ENCODE measurements at regions of chr3 and their contacts with region 1.

Region 1: DNA sequence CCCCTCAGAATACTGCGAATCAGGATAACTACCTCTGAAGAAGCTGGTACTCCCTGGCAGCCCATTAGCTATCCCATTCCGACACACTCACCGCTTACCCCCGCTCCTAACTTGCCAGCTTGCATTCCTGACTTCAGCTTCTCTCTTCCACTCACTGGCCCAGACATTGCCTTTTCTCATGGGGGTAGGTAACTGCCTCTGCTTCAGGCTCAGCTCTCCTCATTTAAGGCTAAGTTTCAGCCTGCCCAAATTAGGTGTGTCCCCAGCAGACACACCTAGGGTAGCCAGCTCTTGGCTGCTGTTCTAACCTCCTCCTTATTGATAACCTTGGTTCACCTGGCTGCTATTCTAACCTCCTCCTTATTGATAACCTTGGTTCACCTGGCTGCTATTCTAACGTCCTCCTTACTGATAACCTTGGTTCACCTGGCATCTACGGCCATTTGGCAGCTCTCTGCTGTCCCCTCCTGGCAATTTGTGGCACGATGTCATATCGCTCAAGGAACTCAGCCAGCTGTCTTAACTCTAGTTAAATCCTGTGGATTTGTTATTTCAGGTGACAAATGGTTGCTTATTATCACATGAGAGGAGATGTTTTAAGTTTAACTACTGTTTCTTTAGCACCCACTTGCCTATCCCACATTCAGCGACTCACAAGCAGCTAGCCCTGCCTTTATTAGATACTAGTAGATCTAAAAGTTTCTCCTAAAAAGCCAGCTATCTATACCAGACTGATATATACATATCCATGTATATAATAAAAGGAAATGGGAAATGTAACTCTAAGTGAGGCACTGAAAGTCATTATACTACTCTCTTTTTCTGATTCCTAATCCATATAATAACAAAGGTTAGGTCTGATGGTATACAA is 106.5 kb upstream of the ACP3 start:
- DNase-seq: peak; percentile 49 to 84
- H3K4me3 ChIP-seq: no peak overlapping the region
- H3K27ac ChIP-seq: no peak overlapping the region
- H3K4me1 ChIP-seq: peaks cover 0 to 4% (median under 1%) of the 10 kb centered on the region in 4 experiments; a peak in 2 of 7 replicates
- H3K27me3 ChIP-seq: peaks cover 27 to 42% (median 40%) of the 10 kb centered on the region in 4 experiments
- CTCF ChIP-seq: peak; percentile 88 to 93 (median 90)
- EP300 ChIP-seq: no peak
- POLR2A ChIP-seq: no peak
- RAD21 ChIP-seq: peak; percentile 91 to 95

Region 2: GRCh38 chr3:132016061-132017041 is 194.4 kb before region 1 on chr3:
- CTCF ChIA-PET with region 1: no interaction called
- POLR2A ChIA-PET with region 1: no interaction called
- DNase-seq: no peak
- H3K4me3 ChIP-seq: no peak overlapping the region
- H3K27ac ChIP-seq: no peak overlapping the region
- H3K4me1 ChIP-seq: peaks cover 0 to 4% (median 1%) of the 10 kb centered on the region in 4 experiments; a peak in 2 of 7 replicates
- H3K27me3 ChIP-seq: no peaks in the 10 kb centered on the region
- CTCF ChIP-seq: no peak
- EP300 ChIP-seq: no peak
- POLR2A ChIP-seq: no peak
- RAD21 ChIP-seq: no peak

Region 3: DNA sequence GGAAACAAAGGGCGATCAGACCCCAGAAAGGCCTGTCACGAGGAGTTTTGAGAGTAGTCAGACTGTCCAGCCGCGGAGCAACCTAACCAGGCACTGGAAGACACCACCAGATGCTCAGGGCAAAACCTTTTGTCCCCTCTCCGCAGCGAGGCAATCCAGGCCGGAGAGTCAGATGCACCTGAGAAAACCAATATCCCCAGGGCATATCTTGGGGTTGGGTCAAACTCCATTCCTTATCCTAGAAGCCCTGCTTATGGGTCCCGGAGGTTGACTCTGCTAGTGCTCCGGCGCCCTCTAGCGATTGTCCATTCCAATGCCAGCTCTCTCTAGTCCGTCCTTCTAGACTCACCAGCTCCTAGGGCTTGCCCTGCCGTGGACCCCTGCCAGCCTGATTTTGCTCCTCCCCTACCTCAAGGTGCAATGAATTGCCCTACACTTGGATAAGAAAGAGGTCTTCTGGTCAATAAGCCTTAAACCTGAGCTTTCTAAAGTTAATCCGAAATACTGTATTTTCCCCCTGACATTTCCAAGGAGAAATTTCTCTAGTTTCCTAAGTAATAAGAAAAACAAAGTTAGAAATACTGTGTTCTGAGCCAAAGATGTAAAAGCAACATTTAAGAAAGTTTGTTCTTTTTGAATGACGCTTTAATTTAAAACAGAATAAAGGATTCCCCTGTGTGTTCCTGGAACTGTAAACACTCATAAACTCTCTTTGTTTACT is 181.4 kb before region 1 on chr3:
- CTCF ChIA-PET with region 1: interaction called, 15 read pairs
- POLR2A ChIA-PET with region 1: no interaction called
- DNase-seq: peak; percentile 91 to 94
- H3K4me3 ChIP-seq: no peak overlapping the region
- H3K27ac ChIP-seq: no peak overlapping the region
- H3K4me1 ChIP-seq: peaks cover 0 to 2% (median 0%) of the 10 kb centered on the region in 4 experiments; a peak in 3 of 7 replicates
- H3K27me3 ChIP-seq: peaks cover 0 to 14% (median 6%) of the 10 kb centered on the region in 4 experiments; a peak in 6 of 7 replicates
- CTCF ChIP-seq: peak; percentile 85 to 96 (median 96)
- EP300 ChIP-seq: no peak
- POLR2A ChIP-seq: no peak
- RAD21 ChIP-seq: peak; percentile 99

Region 4: DNA sequence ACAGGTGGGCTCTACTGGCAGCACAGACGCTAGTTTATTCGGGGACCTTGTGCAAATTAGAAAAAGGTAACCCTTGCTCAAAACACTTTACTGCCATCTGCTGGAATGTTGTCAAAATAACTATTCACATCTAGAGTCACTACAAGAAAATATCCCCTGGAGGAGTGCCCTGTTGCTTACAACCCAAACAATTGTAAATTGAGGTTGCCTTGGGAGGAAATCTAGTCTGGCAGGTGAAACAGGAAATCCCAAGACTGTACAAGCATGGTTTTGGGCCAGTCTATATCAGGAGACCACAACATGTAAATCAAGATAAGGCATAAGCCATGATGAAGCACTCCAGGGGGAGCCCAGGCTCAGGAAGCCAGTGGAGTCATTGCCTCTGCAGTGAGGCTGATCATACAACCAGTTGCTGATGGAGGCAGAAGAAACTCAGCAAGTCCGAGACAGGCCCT is 30.3 kb before region 1 on chr3:
- CTCF ChIA-PET with region 1: interaction called, 20 read pairs
- POLR2A ChIA-PET with region 1: no interaction called
- DNase-seq: peak; percentile 5 to 47
- H3K4me3 ChIP-seq: no peak overlapping the region
- H3K27ac ChIP-seq: no peak overlapping the region
- H3K4me1 ChIP-seq: peaks cover 0 to 3% (median 2%) of the 10 kb centered on the region in 4 experiments; a peak in 2 of 7 replicates
- H3K27me3 ChIP-seq: no peaks in the 10 kb centered on the region; a peak in 1 of 7 replicates
- CTCF ChIP-seq: peak in 2 of 3 experiments; percentile 61 to 69; a peak in 3 of 4 replicates
- EP300 ChIP-seq: no peak
- POLR2A ChIP-seq: no peak
- RAD21 ChIP-seq: peak; percentile 85 to 91

Region 5: GRCh38 chr3:132189601-132190000 is 21.1 kb before region 1 on chr3:
- CTCF ChIA-PET with region 1: interaction called, 29 read pairs
- POLR2A ChIA-PET with region 1: no interaction called
- DNase-seq: no peak
- H3K4me3 ChIP-seq: no peak overlapping the region
- H3K27ac ChIP-seq: no peak overlapping the region
- H3K4me1 ChIP-seq: no peaks in the 10 kb centered on the region
- H3K27me3 ChIP-seq: no peaks in the 10 kb centered on the region
- CTCF ChIP-seq: no peak
- EP300 ChIP-seq: no peak
- POLR2A ChIP-seq: no peak
- RAD21 ChIP-seq: no peak

Region 6: DNA sequence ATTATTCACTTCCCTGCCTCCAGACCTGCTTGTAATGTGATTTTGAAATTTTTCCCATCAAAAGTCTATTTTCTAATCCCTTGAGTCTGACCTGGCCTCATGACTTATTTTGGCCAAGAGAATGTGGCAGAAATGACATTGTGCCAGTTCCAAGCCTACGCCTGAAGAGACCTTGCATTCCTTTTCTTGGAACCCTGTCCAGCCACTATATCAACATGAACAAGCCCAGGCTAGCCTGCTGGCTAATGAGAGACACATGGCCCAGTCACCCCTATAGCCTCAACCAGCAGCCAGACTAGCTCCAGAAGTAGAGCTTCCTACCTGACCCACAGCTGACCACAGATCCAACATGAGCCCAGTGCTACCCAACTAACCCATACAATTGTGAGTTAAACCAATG is 14.6 kb before region 1 on chr3:
- CTCF ChIA-PET with region 1: interaction called, 29 read pairs
- POLR2A ChIA-PET with region 1: interaction called, 3 read pairs
- DNase-seq: no peak
- H3K4me3 ChIP-seq: no peak overlapping the region
- H3K27ac ChIP-seq: no peak overlapping the region
- H3K4me1 ChIP-seq: no peaks in the 10 kb centered on the region
- H3K27me3 ChIP-seq: no peaks in the 10 kb centered on the region
- CTCF ChIP-seq: no peak
- EP300 ChIP-seq: no peak
- POLR2A ChIP-seq: no peak
- RAD21 ChIP-seq: no peak

Region 7: DNA sequence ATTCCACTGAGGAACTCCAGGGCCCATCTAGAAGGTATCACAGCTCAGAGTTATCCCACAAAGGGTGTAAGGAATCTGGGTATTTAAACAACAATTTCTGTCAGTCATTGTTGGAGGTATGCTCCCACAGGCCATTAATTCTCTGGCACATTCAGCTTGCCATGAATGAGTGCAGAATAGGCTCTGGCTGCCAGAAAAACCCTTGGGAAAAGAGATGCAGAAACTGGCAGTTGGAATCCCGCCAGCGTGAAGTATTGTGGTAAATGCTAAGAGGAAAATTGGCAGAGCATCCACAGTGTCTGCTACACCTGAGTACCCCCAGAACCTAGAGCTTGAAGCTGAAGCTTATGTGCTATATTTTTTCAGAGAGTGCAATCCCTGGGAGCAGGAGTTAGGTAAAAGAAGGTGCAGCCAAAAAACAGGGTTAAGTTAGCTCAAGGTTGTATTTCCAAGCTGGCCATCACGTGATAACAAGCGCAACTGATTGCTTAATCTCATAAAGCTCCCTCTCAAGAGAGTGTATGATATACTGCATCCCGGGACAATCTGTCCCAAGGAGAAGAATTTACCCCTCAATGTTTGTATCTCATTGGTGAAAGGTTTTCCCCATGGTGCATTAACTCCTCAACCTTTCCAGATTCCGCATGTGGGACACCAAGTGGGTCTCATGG is 12.3 kb after region 1 on chr3:
- CTCF ChIA-PET with region 1: interaction called, 43 read pairs
- POLR2A ChIA-PET with region 1: interaction called, 3 read pairs
- DNase-seq: no peak
- H3K4me3 ChIP-seq: no peak overlapping the region
- H3K27ac ChIP-seq: no peak overlapping the region
- H3K4me1 ChIP-seq: peaks cover 0 to 8% (median 5%) of the 10 kb centered on the region in 4 experiments; a peak in 4 of 7 replicates
- H3K27me3 ChIP-seq: no peaks in the 10 kb centered on the region
- CTCF ChIP-seq: no peak
- EP300 ChIP-seq: no peak
- POLR2A ChIP-seq: no peak
- RAD21 ChIP-seq: no peak